Activated naive CD4-positive, alpha-beta T cell treated with anti-CD3 and anti-CD28 coated beads for 36 hours (primary cell): ENCODE measurements at regions of chr12 and their contacts with region 1.

Region 1: DNA sequence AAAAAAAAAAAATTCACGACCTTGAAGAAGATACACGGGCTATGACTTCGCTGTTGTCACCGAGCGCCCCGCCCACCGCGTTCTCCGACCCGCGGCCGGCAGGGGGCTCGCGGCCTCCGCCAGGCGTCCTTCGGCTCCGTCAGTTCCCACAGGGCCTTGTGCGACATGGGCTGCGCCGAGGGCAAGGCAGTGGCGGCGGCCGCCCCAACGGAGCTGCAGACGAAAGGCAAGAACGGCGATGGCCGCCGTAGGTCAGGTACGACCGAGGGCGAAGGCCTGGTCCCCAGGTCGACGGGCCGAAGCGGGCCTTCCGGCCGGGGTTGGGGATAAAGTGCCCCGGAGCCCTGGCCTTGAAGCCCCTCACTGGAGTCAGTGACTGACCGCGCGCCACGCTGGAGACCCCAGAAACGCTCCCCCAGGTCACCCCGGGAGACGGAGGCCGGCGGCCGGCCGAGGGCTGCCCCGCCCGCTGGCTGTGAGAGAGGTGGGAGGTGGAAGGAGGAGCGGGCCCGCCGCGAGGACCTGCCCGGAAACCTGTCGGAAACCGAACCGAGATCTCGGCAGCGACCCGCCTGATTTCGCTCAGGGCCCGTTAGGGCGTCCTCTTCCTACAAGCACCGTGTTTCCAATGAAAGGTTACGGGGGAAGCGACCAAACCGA is at the start of gene TXNRD1:
- DNase-seq: peak; percentile 88
- H3K4me3 Mint-ChIP-seq: peak within 1 kb of the TSS; percentile 65
- H3K27ac Mint-ChIP-seq: no peak within 1 kb of the TSS
- H3K4me1 Mint-ChIP-seq: peaks cover 39% of the 10 kb centered on the region
- H3K27me3 Mint-ChIP-seq: no peaks in the 10 kb centered on the region
- total RNA-seq, gene TXNRD1: 86.0 to 86.9 TPM

Region 2: GRCh38 chr12:104137913-104138796 is 77.6 kb before region 1 on chr12 and contains the start of gene NFYB:
- CTCF ChIA-PET with region 1: no interaction called
- intact Hi-C with region 1: loop called (anchors 2 kb)
- DNase-seq: peak; percentile 95
- H3K4me3 Mint-ChIP-seq: peak within 1 kb of the TSS; percentile 84
- H3K27ac Mint-ChIP-seq: peak within 1 kb of the TSS; percentile 84
- H3K4me1 Mint-ChIP-seq: peaks cover 14% of the 10 kb centered on the region
- H3K27me3 Mint-ChIP-seq: no peaks in the 10 kb centered on the region
- total RNA-seq, gene NFYB: 23.3 to 28.3 TPM

Region 3: DNA sequence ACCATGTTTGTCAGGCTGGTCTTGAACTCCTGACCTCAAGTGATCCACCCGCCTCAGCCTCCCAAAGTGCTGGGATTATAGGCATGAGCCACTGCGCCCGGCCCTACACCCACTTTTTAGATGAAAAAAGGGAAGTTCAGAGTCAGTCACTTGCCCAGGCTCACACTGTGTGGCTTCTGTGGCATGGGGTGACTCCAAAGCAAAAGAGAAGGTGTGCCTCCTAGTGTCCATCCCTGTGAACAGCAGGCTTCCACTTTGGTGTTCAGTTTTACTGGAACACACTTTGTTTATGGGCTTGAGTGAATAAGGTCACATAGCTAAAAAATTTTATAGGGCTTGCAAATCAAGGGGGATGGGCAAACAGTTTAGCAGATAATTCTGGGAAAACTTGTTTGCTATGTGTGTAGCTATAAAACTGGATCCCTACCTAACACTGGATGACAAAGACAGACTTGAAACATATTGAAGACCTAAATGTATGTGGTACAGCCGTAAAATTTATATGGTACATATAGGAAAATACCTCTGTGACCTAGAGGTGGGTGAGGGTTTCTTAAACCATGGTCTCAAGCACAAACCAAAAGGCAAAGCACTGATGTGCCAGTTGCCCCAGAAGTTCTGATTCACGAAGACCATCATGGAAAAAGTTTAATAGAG is 142.7 kb after region 1 on chr12:
- CTCF ChIA-PET with region 1: interaction called, 6 read pairs
- intact Hi-C with region 1: loop called (anchors 1 kb)
- DNase-seq: peak; percentile 86
- H3K4me3 Mint-ChIP-seq: no peak overlapping the region
- H3K27ac Mint-ChIP-seq: no peak overlapping the region
- H3K4me1 Mint-ChIP-seq: no peaks in the 10 kb centered on the region
- H3K27me3 Mint-ChIP-seq: no peaks in the 10 kb centered on the region

Region 4: GRCh38 chr12:104473374-104473983 is 257.7 kb after region 1 on chr12:
- CTCF ChIA-PET with region 1: no interaction called
- intact Hi-C with region 1: no loop called
- DNase-seq: no peak
- H3K4me3 Mint-ChIP-seq: peak overlapping the region; percentile 30
- H3K27ac Mint-ChIP-seq: no peak overlapping the region
- H3K4me1 Mint-ChIP-seq: peaks cover 55% of the 10 kb centered on the region
- H3K27me3 Mint-ChIP-seq: no peaks in the 10 kb centered on the region

Region 5: GRCh38 chr12:104958009-104958945 is 742.5 kb after region 1 on chr12 and contains the start of gene SLC41A2:
- CTCF ChIA-PET with region 1: no interaction called
- intact Hi-C with region 1: loop called (anchors 10 kb)
- DNase-seq: peak; percentile 85
- H3K4me3 Mint-ChIP-seq: peak within 1 kb of the TSS; percentile 84
- H3K27ac Mint-ChIP-seq: peak within 1 kb of the TSS; percentile 72
- H3K4me1 Mint-ChIP-seq: peaks cover 19% of the 10 kb centered on the region
- H3K27me3 Mint-ChIP-seq: peaks cover 14% of the 10 kb centered on the region
- total RNA-seq, gene SLC41A2: 2.7 to 3.5 TPM

Region 6: DNA sequence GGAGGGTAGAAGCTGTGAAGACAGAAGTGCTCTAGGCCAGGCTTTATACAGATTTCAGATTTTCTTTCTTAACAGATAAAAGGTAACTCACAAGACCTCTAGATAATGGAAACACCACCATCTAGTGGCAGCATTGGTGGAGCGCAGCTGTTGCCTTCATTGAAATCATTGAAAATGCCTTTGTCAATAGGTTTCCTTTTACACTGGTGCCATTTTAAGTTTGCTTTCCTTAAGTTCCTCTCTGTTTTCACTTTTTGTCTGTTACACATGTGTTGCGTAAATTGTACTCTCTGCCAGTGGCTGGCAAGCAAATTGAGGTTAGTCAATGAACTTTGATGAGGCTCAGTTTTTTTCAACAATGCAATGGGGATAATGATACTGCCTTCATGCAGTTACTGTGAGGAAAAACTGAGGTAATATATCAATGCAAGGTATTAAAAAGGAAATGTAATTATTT is 837.4 kb after region 1 on chr12:
- CTCF ChIA-PET with region 1: no interaction called
- intact Hi-C with region 1: loop called (anchors 1 kb)
- DNase-seq: peak; percentile 89
- H3K4me3 Mint-ChIP-seq: no peak overlapping the region
- H3K27ac Mint-ChIP-seq: no peak overlapping the region
- H3K4me1 Mint-ChIP-seq: no peaks in the 10 kb centered on the region
- H3K27me3 Mint-ChIP-seq: no peaks in the 10 kb centered on the region

Region 7: GRCh38 chr12:105485321-105485910 is 1269.6 kb after region 1 on chr12:
- CTCF ChIA-PET with region 1: no interaction called
- intact Hi-C with region 1: no loop called
- DNase-seq: no peak
- H3K4me3 Mint-ChIP-seq: no peak overlapping the region
- H3K27ac Mint-ChIP-seq: no peak overlapping the region
- H3K4me1 Mint-ChIP-seq: no peaks in the 10 kb centered on the region
- H3K27me3 Mint-ChIP-seq: no peaks in the 10 kb centered on the region